Activated naive CD4-positive, alpha-beta T cell treated with anti-CD3 and anti-CD28 coated beads for 36 hours (primary cell): ENCODE measurements at regions of chr17 and their contacts with region 1.

Region 1: GRCh38 chr17:50372758-50373556 is at the starts of genes EME1 and MRPL27:
- DNase-seq: peak; percentile 91
- H3K4me3 Mint-ChIP-seq: peak within 1 kb of the TSS; percentile 99
- H3K27ac Mint-ChIP-seq: peak within 1 kb of the TSS; percentile 99
- H3K4me1 Mint-ChIP-seq: peaks cover 30% of the 10 kb centered on the region
- H3K27me3 Mint-ChIP-seq: no peaks in the 10 kb centered on the region
- total RNA-seq, gene EME1: 68.9 to 69.8 TPM
- total RNA-seq, gene MRPL27: 55.1 to 58.2 TPM

Region 2: DNA sequence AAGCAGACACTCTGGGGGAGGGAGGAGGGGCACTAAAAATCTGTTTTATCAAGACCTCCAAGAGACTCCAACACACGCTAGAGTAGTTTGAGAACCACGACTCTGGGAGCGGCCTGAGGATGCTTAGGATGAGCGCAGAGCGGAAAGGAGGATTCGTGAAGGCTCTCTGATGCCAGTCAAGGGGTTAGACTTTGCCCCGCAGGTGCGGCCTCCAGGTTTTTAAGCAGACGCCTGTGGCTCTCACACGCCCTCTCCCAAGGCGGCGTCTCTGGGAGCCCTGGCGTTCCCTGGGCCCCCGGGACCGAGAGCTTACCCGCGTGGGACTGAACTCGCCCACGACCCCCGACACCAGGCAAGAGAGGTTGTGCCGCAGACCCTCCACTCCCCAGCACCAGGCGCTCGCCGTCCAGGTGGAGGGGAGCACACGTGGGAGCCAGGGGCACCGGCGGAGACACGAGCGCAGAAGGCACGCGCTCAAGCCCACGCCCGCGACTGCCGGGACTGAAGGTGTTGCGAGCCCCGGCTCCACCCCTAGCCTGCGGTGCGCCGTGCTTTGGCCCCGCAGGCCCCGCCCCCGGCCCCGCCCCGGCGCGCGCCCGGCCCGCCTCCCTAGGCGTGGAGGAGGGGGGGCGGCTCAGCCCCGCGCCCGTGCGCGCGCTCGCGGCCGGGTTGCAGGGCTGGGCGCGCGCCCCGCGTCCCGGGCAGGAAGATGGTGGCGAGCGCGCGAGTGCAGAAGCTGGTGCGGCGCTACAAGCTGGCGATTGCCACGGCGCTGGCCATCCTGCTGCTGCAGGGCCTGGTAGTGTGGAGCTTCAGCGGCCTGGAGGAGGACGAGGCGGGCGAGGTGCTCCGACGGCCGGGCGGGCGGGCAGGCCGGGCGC is 27.3 kb before region 1 on chr17 and contains the start of gene XYLT2:
- CTCF ChIA-PET with region 1: interaction called, 5 read pairs
- intact Hi-C with region 1: loop called (anchors 1 kb)
- DNase-seq: peak; percentile 90
- H3K4me3 Mint-ChIP-seq: peak within 1 kb of the TSS; percentile 89
- H3K27ac Mint-ChIP-seq: peak within 1 kb of the TSS; percentile 88
- H3K4me1 Mint-ChIP-seq: peaks cover 29% of the 10 kb centered on the region
- H3K27me3 Mint-ChIP-seq: no peaks in the 10 kb centered on the region
- total RNA-seq, gene XYLT2: 21.1 to 21.8 TPM

Region 3: DNA sequence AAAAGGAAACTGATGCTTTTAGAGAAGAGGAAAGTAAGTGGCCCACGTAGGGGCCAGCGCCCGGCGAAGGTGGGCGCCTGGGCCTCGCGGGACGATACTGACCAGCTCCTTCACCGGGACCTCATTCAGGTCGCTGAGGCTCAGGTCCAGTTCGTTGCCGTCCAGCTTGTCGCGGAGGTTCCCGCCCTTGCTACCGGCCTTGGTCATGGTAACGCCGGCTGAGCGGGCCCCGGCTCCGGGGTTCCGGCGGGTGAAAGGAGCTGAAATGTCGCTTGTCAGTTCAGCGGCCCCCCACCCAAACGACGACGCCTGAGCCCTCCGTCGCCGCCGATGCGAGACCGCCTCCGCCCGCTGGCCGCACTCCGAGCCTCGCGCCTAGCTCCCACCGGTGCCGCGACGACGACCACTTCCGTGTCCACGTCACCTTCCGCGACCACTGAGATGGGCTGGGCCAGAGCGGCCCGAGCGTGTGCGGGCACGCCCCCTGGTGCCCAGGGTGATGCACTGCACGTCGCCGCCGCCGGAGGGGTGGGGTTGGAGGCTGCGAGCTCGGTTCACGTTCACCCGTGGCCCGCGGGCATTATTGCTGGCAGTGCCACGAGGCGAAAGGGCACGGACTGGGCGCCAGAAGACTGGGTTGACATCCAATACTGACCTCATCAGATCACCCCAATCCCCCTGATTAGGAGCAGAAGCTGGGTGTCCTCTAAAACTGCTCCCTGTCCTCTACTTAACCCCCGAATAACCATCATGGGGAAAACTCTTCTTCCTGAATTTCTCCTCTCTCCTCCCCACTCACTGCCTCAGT is 24.4 kb after region 1 on chr17 and contains the start of gene LRRC59:
- CTCF ChIA-PET with region 1: interaction called, 24 read pairs
- intact Hi-C with region 1: loop called (anchors 1 kb)
- DNase-seq: peak; percentile 92
- H3K4me3 Mint-ChIP-seq: peak within 1 kb of the TSS; percentile 92
- H3K27ac Mint-ChIP-seq: peak within 1 kb of the TSS; percentile 79
- H3K4me1 Mint-ChIP-seq: peaks cover 32% of the 10 kb centered on the region
- H3K27me3 Mint-ChIP-seq: no peaks in the 10 kb centered on the region
- total RNA-seq, gene LRRC59: 48.1 to 50.1 TPM

Region 4: GRCh38 chr17:50407921-50408320 is 35.0 kb after region 1 on chr17:
- CTCF ChIA-PET with region 1: no interaction called
- intact Hi-C with region 1: no loop called
- DNase-seq: no peak
- H3K4me3 Mint-ChIP-seq: no peak overlapping the region
- H3K27ac Mint-ChIP-seq: no peak overlapping the region
- H3K4me1 Mint-ChIP-seq: no peaks in the 10 kb centered on the region
- H3K27me3 Mint-ChIP-seq: no peaks in the 10 kb centered on the region

Region 5: DNA sequence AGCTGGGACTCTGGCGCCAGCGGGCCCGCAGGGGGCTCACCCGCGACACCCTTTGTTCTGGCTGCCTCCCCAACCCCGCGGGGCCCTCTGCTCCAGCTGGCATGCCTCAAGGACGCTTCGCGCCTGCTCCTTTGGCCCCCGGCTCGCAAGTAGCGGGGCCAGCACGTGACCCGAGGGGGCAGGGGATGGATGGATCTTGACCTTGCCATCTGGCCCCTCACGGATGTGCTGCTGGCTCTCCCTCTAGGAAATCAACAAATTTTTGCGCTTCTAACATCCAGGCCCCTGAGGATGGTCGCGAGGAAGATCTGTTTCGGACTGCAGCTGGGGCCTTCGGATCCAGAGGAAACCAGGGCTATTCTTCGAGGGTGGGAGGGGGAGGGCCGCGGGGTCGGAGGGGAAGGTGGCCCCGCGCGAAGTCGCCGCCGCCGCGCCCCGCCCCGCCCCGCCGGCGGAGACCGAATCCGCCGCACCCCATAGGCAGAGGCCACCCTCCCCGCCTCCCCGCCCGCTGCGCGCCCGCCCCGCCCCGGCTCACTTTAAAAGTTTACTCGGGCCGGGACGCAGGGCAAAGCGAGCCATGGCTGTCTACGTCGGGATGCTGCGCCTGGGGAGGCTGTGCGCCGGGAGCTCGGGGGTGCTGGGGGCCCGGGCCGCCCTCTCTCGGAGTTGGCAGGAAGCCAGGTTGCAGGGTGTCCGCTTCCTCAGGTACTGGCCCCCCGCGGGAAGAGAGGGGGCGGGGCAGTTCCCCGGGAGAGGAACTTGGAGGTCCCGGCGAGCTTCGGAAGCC is 52.9 kb after region 1 on chr17 and contains the start of gene ACSF2:
- CTCF ChIA-PET with region 1: no interaction called
- intact Hi-C with region 1: loop called (anchors 2 kb)
- DNase-seq: peak; percentile 77
- H3K4me3 Mint-ChIP-seq: peak within 1 kb of the TSS; percentile 77
- H3K27ac Mint-ChIP-seq: no peak within 1 kb of the TSS
- H3K4me1 Mint-ChIP-seq: peaks cover 26% of the 10 kb centered on the region
- H3K27me3 Mint-ChIP-seq: no peaks in the 10 kb centered on the region
- total RNA-seq, gene ACSF2: 19.7 to 20.7 TPM

Region 6: GRCh38 chr17:50707289-50708049 is 334.5 kb after region 1 on chr17 and contains the start of gene ANKRD40:
- CTCF ChIA-PET with region 1: no interaction called
- intact Hi-C with region 1: loop called (anchors 1 kb)
- DNase-seq: peak; percentile 94
- H3K4me3 Mint-ChIP-seq: peak within 1 kb of the TSS; percentile 95
- H3K27ac Mint-ChIP-seq: peak within 1 kb of the TSS; percentile 92
- H3K4me1 Mint-ChIP-seq: peaks cover 44% of the 10 kb centered on the region
- H3K27me3 Mint-ChIP-seq: no peaks in the 10 kb centered on the region
- total RNA-seq, gene ANKRD40: 25.7 to 26.5 TPM